Heart right ventricle (tissue), 16 donors: ENCODE measurements at regions of chr9 and their contacts with region 1.

Region 1: GRCh38 chr9:126985870-126986498 is 71.4 kb downstream of the RALGPS1 start:
- DNase-seq: peak; percentile 61 to 64
- ATAC-seq: peak; percentile 39 to 83 (median 69)
- H3K4me3 ChIP-seq: no peak overlapping the region
- H3K27ac ChIP-seq: peak overlapping the region in 6 of 10 donors; percentile 11 to 55 (median 42)
- H3K4me1 ChIP-seq: peaks cover 3 to 51% (median 45%) of the 10 kb centered on the region in 9 donors
- H3K27me3 ChIP-seq: peaks cover 0 to 41% (median 0%) of the 10 kb centered on the region in 7 donors
- CTCF ChIP-seq: peak in 1 of 9 donors; percentile 9

Region 2: GRCh38 chr9:126694206-126695081 is 291.5 kb before region 1 on chr9:
- intact Hi-C with region 1: no loop called
- DNase-seq: no peak
- ATAC-seq: no peak
- H3K4me3 ChIP-seq: no peak overlapping the region
- H3K27ac ChIP-seq: no peak overlapping the region
- H3K4me1 ChIP-seq: no peaks in the 10 kb centered on the region
- H3K27me3 ChIP-seq: peaks cover 0 to 21% (median 15%) of the 10 kb centered on the region in 7 donors
- CTCF ChIP-seq: no peak

Region 3: DNA sequence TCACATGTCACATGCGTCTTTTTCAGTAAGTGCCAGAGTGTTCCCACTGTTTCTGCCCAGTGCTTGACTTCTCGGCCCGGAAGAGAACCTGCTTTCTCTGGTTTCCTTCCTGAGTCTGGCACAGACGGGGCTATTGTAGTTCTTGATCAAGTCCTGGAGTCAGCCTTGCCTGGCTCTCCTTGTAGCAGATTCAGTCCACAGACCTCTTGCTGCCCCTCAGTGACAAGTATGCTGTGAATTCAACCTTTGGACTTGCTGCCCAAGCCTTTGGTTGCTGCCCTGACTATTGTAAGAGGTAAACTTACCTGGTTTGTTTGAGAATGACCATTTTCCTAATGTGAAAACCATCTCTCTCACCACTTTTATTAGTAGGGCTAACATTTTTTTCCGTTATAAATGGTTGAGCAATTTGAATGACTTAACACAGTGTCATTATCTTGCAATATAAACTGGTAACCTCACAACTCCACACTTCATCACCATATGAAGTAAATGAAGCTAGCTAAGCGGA is 100.8 kb before region 1 on chr9:
- intact Hi-C with region 1: no loop called
- DNase-seq: no peak
- ATAC-seq: peak in 7 of 8 donors; percentile 24 to 74 (median 44)
- H3K4me3 ChIP-seq: no peak overlapping the region
- H3K27ac ChIP-seq: peak overlapping the region in 4 of 10 donors; percentile 15 to 54 (median 30)
- H3K4me1 ChIP-seq: peaks cover 0 to 22% (median 16%) of the 10 kb centered on the region in 9 donors
- H3K27me3 ChIP-seq: no peaks in the 10 kb centered on the region
- CTCF ChIP-seq: no peak

Region 4: GRCh38 chr9:126927419-126927818 is 58.6 kb before region 1 on chr9:
- intact Hi-C with region 1: no loop called
- DNase-seq: no peak
- ATAC-seq: no peak
- H3K4me3 ChIP-seq: no peak overlapping the region
- H3K27ac ChIP-seq: no peak overlapping the region
- H3K4me1 ChIP-seq: no peaks in the 10 kb centered on the region
- H3K27me3 ChIP-seq: no peaks in the 10 kb centered on the region
- CTCF ChIP-seq: no peak

Region 5: DNA sequence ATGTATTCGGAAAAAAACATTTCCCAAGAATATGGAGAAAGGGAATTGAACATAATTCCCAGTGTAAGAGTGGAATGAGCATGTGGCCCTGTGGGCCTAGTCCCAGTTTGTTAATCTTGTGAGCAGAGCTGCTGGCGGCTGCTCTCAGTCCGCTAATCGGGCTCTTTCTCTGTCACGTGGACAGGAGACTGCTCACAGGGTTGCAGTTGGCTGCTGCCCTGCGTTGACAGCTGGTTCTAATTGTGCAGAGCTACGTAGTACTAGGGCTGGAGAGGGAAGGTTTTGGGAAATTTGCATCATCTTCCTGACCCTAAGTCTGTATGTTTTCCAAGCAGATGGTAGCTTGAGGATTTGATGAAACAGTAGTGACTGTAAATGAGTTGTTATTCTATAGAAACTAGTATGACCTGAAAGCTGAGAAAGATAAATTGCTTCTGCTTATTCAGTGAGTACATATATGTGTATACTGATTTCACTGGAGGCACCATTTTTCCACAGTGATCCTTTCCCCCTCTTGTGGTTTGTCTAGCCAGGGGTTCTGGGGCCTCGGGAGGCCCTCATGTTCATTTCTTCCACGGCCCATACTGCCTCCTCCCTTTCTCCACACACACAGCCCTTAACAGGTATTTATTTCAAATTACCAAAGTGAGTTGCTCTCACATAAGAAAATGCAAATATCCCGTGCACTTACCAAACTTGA is 35.8 kb after region 1 on chr9:
- intact Hi-C with region 1: loop called in 2 of 10 experiments (anchors 5 kb)
- DNase-seq: peak; percentile 84 to 91
- ATAC-seq: peak; percentile 97 to 100 (median 99)
- H3K4me3 ChIP-seq: no peak overlapping the region
- H3K27ac ChIP-seq: peak overlapping the region; percentile 19 to 86 (median 82)
- H3K4me1 ChIP-seq: peaks cover 5 to 43% (median 30%) of the 10 kb centered on the region in 9 donors
- H3K27me3 ChIP-seq: no peaks in the 10 kb centered on the region
- CTCF ChIP-seq: no peak

Region 6: DNA sequence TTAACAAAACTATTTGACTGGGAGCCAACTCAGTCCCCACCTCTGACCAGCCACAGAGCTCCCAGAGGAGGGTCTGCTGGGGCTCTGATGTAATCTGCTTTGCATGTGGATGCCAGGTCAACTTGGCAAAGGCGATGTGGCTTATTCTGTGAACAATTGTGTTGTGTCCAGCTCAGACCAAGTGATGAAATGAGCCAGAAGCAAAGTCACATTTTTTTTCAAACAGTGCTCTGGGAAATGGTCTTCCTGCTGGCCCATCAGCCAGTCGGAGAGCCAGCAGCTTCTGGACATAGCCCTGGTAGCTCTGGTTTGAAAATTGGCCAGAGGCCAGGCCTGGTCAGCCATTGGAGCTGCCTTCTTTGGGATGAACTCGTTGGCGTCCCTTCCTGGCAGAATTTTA is 50.0 kb after region 1 on chr9:
- intact Hi-C with region 1: loop called in 1 of 10 experiments (anchors 10 kb)
- DNase-seq: peak; percentile 59 to 63
- ATAC-seq: peak; percentile 76 to 90 (median 84)
- H3K4me3 ChIP-seq: no peak overlapping the region
- H3K27ac ChIP-seq: peak overlapping the region in 9 of 10 donors; percentile 11 to 84 (median 69)
- H3K4me1 ChIP-seq: peaks cover 0 to 46% (median 30%) of the 10 kb centered on the region in 9 donors
- H3K27me3 ChIP-seq: no peaks in the 10 kb centered on the region
- CTCF ChIP-seq: no peak

Region 7: DNA sequence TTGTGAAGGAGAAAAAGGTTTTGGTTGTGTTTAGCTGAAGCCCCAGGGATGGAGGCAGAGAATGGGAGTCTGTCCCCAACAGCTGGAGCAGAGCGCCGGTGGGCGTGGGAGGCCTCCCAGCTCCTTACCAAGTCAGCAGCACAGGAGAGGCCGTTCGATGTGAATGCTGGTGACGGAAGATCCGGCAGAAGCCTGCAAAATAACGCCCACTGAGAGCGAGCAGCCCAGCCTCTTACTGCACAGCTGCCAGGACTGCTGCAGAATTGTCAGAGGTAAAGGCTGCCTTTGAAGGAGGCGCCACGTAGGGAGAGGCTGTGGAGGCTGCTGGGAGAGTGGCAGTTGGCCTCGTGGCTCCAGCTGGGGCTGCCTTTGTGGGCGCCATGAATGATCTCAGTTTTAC is 110.2 kb after region 1 on chr9:
- intact Hi-C with region 1: loop called in 1 of 10 experiments (anchors 10 kb)
- DNase-seq: no peak
- ATAC-seq: peak in 7 of 8 donors; percentile 21 to 61 (median 48)
- H3K4me3 ChIP-seq: no peak overlapping the region
- H3K27ac ChIP-seq: peak overlapping the region in 5 of 10 donors; percentile 8 to 51 (median 20)
- H3K4me1 ChIP-seq: peaks cover 0 to 49% (median 31%) of the 10 kb centered on the region in 9 donors
- H3K27me3 ChIP-seq: no peaks in the 10 kb centered on the region
- CTCF ChIP-seq: no peak

Region 8: GRCh38 chr9:127112056-127112455 is 126.1 kb after region 1 on chr9:
- intact Hi-C with region 1: loop called in 1 of 10 experiments (anchors 5 kb)
- DNase-seq: peak; percentile 51 to 83
- ATAC-seq: peak; percentile 39 to 80 (median 68)
- H3K4me3 ChIP-seq: no peak overlapping the region
- H3K27ac ChIP-seq: peak overlapping the region in 9 of 10 donors; percentile 28 to 71 (median 47)
- H3K4me1 ChIP-seq: peaks cover 15 to 97% (median 61%) of the 10 kb centered on the region in 9 donors
- H3K27me3 ChIP-seq: no peaks in the 10 kb centered on the region
- CTCF ChIP-seq: no peak